Activated CD4-positive, alpha-beta memory T cell treated with anti-CD3 and anti-CD28 coated beads for 36 hours (primary cell): ENCODE measurements at regions of chr19 and their contacts with region 1.

Region 1: GRCh38 chr19:33176670-33177416 is 17.3 kb upstream of the LRP3 start:
- DNase-seq: peak; percentile 98
- H3K4me3 Mint-ChIP-seq: peak overlapping the region; percentile 96
- H3K27ac Mint-ChIP-seq: peak overlapping the region; percentile 96
- H3K4me1 Mint-ChIP-seq: peaks cover 30% of the 10 kb centered on the region
- H3K27me3 Mint-ChIP-seq: peaks cover 3% of the 10 kb centered on the region

Region 2: DNA sequence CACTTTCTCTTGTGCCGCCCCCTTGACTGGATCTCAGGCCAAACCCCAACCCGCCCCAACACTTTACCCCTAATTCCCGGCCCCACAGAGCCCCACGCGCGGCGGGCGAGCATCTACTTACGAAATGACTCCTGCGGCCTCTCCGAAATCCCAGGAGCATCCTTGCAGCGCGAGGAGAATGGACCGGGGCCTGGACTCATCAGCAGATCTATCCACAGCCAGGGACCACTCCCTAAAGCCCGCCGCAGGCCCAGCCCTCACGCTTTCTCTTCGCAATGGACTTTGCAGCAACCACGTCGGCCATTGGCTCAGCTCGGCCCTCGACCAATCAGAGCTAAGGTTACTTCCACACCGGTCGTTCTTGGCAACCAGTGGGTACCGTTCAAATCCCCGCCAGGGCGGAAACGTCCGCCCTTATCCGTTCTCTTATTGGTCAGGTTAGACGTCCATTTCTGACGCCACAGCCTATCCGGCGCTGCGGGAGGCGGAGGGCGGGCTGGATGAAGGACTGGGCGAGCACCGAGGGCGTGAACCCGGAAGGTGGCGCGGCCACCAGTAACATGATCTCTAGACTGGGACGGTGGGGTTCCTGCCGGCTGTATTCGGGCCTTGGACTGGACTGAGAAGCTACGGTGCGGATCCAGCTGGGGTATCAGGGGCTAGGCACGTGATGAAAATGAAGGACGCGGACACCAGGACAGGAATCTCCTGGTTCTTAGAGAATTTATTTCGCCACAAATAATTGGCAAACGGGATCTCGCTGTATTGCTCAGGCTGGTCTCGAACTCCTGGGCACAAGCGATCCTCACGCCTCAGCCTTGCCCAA is 204.9 kb before region 1 on chr19 and contains the starts of genes CEP89 and FAAP24:
- CTCF ChIA-PET with region 1: interaction called, 4 read pairs
- POLR2A ChIA-PET with region 1: interaction called, 3 read pairs
- intact Hi-C with region 1: loop called (anchors 2 kb)
- DNase-seq: peak; percentile 99
- H3K4me3 Mint-ChIP-seq: peak within 1 kb of the TSS; percentile 99
- H3K27ac Mint-ChIP-seq: peak within 1 kb of the TSS; percentile 84
- H3K4me1 Mint-ChIP-seq: peaks cover 17% of the 10 kb centered on the region
- H3K27me3 Mint-ChIP-seq: no peaks in the 10 kb centered on the region
- total RNA-seq, gene CEP89: 15.6 to 21.0 TPM
- total RNA-seq, gene FAAP24: 8.1 to 8.3 TPM

Region 3: GRCh38 chr19:33143897-33144405 is 32.9 kb before region 1 on chr19:
- CTCF ChIA-PET with region 1: interaction called, 37 read pairs
- POLR2A ChIA-PET with region 1: no interaction called
- intact Hi-C with region 1: loop called (anchors 2 kb)
- DNase-seq: peak; percentile 75
- H3K4me3 Mint-ChIP-seq: peak overlapping the region; percentile 31
- H3K27ac Mint-ChIP-seq: peak overlapping the region; percentile 28
- H3K4me1 Mint-ChIP-seq: peaks cover 4% of the 10 kb centered on the region
- H3K27me3 Mint-ChIP-seq: peaks cover 7% of the 10 kb centered on the region

Region 4: DNA sequence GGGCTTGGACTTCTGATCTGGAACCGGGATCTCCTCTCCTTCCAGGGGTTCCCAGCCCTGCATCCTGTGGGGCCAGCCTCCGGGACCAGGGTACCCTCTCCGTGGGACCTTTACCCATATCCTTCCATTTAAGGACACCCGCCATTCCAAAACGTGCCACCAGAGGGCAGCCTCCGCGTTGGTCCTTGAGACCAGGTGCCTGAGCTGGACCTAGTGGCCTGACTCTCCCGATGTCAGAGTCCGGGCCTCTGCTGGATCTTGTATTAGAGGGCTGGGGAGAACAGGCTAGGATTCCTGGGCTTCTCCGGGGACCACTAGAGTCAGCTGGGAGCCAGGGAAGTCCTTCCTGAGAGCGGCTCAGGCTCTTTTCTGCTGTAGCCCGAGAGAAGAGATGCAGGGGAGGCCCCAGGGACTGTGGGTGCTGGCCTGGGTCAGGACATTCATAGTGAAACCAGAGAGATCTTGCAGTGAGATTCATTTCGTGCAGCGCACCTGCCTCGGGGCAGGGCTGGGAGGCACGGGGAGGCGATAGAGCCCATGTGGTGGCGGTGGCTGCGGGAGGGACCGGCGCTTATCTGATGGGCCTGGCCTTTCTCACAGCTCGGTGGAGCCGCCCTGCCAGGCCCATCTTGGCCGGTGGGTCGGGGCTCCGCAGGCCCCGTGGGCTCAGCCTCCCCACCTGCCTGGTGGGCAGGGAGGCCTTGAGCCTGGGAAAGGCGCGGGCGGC is 58.6 kb after region 1 on chr19:
- CTCF ChIA-PET with region 1: no interaction called
- POLR2A ChIA-PET with region 1: no interaction called
- intact Hi-C with region 1: loop called (anchors 1 kb)
- DNase-seq: peak; percentile 87
- H3K4me3 Mint-ChIP-seq: peak overlapping the region; percentile 50
- H3K27ac Mint-ChIP-seq: no peak overlapping the region
- H3K4me1 Mint-ChIP-seq: peaks cover 7% of the 10 kb centered on the region
- H3K27me3 Mint-ChIP-seq: peaks cover 12% of the 10 kb centered on the region

Region 5: GRCh38 chr19:33260628-33261418 is 84.0 kb after region 1 on chr19:
- CTCF ChIA-PET with region 1: no interaction called
- POLR2A ChIA-PET with region 1: no interaction called
- intact Hi-C with region 1: no loop called
- DNase-seq: no peak
- H3K4me3 Mint-ChIP-seq: no peak overlapping the region
- H3K27ac Mint-ChIP-seq: no peak overlapping the region
- H3K4me1 Mint-ChIP-seq: peaks cover 6% of the 10 kb centered on the region
- H3K27me3 Mint-ChIP-seq: peaks cover 17% of the 10 kb centered on the region

Region 6: GRCh38 chr19:33388725-33389420 is 212.0 kb after region 1 on chr19:
- CTCF ChIA-PET with region 1: no interaction called
- POLR2A ChIA-PET with region 1: no interaction called
- intact Hi-C with region 1: no loop called
- DNase-seq: no peak
- H3K4me3 Mint-ChIP-seq: no peak overlapping the region
- H3K27ac Mint-ChIP-seq: no peak overlapping the region
- H3K4me1 Mint-ChIP-seq: peaks cover under 1% of the 10 kb centered on the region
- H3K27me3 Mint-ChIP-seq: no peaks in the 10 kb centered on the region

Region 7: DNA sequence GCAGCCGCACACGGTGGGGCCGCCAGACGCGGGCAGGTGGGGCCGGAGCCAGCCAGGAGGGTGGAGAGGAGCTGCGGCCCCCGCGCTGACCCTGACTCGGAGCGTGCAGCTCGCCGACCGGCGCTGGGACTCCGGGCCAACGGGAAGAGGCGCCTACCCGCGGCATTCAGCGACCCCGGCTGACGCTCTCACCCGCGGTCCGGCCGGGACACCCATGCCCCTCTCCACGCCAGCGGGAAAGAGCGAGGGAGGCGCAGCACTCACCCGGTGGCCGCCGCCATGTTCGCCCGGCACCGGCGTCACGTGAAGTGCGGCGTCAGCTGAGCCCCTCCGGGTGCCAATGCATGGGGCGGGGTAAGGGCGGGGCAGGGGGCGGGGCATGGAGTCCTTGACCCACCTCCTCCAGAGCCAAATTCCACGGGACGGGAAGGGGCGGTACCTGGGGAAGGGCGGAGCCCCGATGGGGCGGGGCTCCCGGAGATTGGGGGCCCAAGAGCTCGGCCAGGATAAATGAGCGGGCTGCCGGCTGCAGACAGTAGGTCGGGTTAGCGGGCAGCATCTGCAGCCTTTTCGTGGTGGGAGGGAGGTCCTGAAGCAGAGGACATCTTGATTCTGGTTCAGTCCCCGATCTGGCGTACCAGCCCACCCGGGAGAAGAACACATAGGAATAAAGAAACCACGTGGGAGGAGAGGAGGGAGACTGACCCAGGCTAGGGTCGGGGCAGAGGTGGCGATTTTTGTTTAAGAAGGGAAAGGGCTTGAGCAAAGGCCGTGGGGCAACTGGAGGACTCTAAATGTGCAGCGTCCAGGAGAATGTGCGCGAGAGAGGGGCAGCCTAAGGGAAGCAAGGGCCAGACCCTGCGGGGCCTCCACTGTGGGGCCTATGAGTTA is 344.9 kb after region 1 on chr19 and contains the start of gene PEPD:
- CTCF ChIA-PET with region 1: no interaction called
- POLR2A ChIA-PET with region 1: no interaction called
- intact Hi-C with region 1: loop called (anchors 2 kb)
- DNase-seq: peak; percentile 93
- H3K4me3 Mint-ChIP-seq: peak within 1 kb of the TSS; percentile 81
- H3K27ac Mint-ChIP-seq: no peak within 1 kb of the TSS
- H3K4me1 Mint-ChIP-seq: peaks cover 19% of the 10 kb centered on the region
- H3K27me3 Mint-ChIP-seq: no peaks in the 10 kb centered on the region
- total RNA-seq, gene PEPD: 29.3 to 30.6 TPM